B cell (primary cell): ENCODE measurements at regions of chr1 and their contacts with region 1.

Region 1: DNA sequence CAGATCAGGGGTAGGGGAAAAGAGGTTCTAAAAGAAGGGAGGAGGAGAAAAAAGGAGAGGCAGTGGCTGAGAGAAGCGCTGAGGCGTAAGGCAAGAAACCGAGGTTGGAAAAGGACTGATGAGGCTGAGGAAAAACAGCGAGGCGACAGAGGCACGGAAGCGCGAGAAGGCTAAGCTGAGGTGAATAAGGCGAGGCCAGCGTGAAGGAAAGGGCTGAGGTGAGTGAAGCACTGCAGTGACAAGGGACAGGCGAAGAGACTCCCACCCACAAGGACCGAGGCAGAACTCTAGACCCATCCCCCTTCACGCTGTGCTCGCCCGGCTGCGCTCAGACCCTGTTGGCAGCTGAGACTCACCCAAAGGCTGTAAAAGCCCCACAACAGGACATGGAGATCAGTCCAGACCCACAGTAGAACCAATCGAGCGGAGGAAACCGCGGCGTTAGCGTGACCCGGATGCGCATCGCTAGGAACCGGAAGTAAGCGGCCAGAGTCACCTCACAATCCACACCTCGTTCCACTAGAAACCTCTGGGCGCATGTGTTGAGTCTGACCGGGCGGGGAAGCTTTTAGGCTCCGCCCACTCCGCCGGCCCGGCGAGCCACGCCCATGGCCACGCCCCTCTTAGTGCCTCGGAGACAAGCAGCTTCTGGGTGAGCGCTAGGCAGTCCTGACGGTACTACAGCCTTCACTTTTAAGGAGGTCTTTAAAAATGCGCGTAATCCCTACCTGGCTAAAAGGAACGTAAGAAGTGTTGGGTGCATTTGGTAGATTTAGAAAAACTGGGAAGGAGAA is at the start of gene EYA3:
- DNase-seq: peak; percentile 99
- ATAC-seq: peak; percentile 93
- H3K4me3 ChIP-seq: peak within 1 kb of the TSS; percentile 79 to 97 (median 82)
- H3K4me3 Mint-ChIP-seq: peak within 1 kb of the TSS; percentile 94
- H3K27ac ChIP-seq: peak within 1 kb of the TSS; percentile 83 to 91
- H3K27ac Mint-ChIP-seq: peak within 1 kb of the TSS; percentile 96
- H3K4me1 ChIP-seq: peaks cover 11 to 24% of the 10 kb centered on the region in 2 donors
- H3K4me1 Mint-ChIP-seq: peaks cover 43% of the 10 kb centered on the region
- H3K27me3 ChIP-seq: no peaks in the 10 kb centered on the region
- H3K27me3 Mint-ChIP-seq: no peaks in the 10 kb centered on the region
- CTCF ChIP-seq: no peak
- total RNA-seq, gene EYA3: 31.3 and 31.7 TPM in 2 replicates

Region 2: DNA sequence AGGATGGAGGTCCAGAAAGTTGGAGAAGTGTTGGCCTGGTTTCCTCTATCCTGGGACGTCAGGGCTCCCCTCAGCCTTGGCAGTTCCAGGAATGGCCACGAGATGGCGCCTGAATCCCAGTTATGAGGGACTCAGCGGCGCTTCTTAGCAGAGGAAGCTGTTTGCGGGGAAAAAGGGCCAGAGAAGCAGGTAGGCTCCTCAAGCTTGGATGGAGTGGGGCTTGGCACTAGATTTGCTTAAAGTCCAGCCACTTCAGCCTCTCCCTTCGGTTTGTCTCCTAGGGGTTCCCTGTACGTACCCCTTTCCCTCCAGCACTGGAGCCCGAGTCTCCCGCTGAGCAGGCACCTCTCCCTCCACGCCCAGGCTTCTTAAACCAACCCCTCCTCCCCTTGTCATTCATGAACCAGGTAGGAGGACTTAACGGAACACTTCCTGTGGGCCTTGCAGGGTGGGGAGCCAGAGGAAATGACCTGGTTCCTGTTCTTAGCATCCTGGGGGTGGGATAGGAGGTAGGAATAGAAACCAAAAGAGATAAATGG is 1043.7 kb before region 1 on chr1:
- CTCF ChIA-PET with region 1: no interaction called
- POLR2A ChIA-PET with region 1: no interaction called
- intact Hi-C with region 1: no loop called
- DNase-seq: peak; percentile 88
- ATAC-seq: peak; percentile 94
- H3K4me3 ChIP-seq: peak overlapping the region in 4 of 5 experiments; percentile 6 to 51 (median 36)
- H3K4me3 Mint-ChIP-seq: peak overlapping the region; percentile 52
- H3K27ac ChIP-seq: no peak overlapping the region
- H3K27ac Mint-ChIP-seq: peak overlapping the region; percentile 6
- H3K4me1 ChIP-seq: peaks cover 6 to 15% of the 10 kb centered on the region in 2 donors
- H3K4me1 Mint-ChIP-seq: peaks cover 15% of the 10 kb centered on the region
- H3K27me3 ChIP-seq: peaks cover 0 to 5% (median 0%) of the 10 kb centered on the region in 4 experiments
- H3K27me3 Mint-ChIP-seq: peaks cover 3% of the 10 kb centered on the region
- CTCF ChIP-seq: peak; percentile 97

Region 3: DNA sequence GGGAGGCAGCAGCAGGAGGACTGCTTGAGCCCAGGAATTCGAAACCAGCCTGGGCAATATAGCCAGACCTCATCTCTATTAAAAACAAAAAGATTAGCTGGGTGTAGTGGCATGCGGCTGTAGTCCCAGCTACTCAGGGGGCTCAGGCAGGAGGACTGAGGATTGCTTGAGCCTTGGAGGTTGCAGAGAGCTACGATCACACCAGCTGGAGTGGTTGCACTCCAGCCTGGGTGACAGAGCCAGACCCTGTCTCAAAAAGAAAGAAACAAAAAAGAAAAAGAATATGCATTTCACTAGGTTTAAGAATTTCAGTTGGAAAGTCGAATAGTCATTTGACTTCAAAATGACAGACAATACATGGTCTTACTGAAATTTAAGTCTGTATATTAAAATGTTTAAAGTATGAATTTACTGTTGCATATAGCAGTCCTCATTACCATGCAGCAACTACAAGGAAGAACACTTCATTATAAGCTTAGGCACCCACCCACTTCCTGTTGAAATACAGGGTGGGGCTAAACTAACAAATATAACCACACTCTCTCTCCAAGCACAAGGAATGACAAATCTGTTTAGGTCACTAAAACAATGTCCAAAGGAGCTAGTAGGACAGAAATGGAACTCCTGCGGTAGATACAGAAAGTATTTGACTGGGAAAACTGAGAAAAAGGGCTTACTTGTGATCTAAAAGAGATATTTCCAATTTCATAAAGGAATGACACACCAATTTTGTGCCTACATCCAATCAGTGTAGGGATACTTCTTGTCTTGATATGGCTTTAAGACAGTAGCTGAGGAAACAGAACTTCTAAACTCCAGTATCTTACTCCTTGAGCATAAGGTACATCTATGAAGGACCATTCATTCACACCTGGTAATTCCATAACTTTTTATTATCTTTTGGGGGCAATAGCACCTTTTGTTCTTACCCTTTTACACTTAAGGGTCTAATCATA is 651.9 kb before region 1 on chr1:
- CTCF ChIA-PET with region 1: no interaction called
- POLR2A ChIA-PET with region 1: no interaction called
- intact Hi-C with region 1: no loop called
- DNase-seq: peak; percentile 50
- ATAC-seq: peak; percentile 55
- H3K4me3 ChIP-seq: peak overlapping the region; percentile 9 to 68 (median 34)
- H3K4me3 Mint-ChIP-seq: peak overlapping the region; percentile 84
- H3K27ac ChIP-seq: peak overlapping the region; percentile 71 to 83
- H3K27ac Mint-ChIP-seq: peak overlapping the region; percentile 86
- H3K4me1 ChIP-seq: peaks cover 76 to 78% of the 10 kb centered on the region in 2 donors
- H3K4me1 Mint-ChIP-seq: peaks cover 78% of the 10 kb centered on the region
- H3K27me3 ChIP-seq: no peaks in the 10 kb centered on the region
- H3K27me3 Mint-ChIP-seq: no peaks in the 10 kb centered on the region
- CTCF ChIP-seq: no peak

Region 4: DNA sequence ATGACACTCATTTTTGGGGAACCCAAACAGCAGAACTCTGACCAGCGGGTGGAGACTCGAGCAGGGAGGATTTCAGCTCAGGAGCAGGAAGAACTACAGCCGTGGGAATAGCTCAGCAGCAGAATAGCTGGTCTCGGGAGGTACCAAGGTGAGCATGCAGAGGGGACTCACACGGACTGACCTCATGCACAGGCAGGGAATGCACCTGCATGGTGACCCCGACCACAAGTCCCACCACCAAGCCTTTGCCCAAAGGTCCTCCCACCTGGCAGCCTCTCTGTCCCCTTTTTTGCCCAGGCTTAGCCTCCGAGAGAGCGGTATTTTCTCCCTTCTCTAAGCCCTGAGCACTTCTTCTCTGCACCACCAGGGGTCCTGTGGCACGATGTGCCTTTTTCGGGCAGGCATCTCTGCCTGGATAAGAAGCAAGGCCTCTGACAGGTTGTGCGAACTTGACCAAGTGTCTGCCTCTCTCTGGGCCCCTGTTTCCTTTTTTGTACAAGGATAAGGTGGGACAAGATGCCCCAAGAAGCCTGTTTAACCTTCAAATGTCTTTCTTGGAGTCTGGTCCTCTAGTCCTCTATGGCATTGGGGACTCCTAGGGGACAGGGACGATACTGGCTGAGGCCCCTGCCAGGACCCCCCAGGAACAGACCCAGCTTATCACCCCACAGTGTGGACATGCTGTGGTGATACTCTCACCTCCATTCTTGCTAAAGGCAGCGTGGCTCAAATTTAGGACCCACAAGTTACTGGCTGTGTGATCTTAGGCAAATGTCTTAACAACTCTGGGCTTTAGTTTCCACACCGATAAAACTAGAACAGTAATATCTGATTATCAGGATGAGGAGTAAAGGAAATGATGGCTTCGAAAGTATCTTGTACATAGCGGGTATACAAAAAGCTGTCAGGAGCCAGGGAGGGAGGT is 444.4 kb before region 1 on chr1:
- CTCF ChIA-PET with region 1: no interaction called
- POLR2A ChIA-PET with region 1: no interaction called
- intact Hi-C with region 1: no loop called
- DNase-seq: peak; percentile 82
- ATAC-seq: peak; percentile 98
- H3K4me3 ChIP-seq: no peak overlapping the region
- H3K4me3 Mint-ChIP-seq: no peak overlapping the region
- H3K27ac ChIP-seq: no peak overlapping the region
- H3K27ac Mint-ChIP-seq: peak overlapping the region; percentile 74
- H3K4me1 ChIP-seq: peaks cover 10 to 17% of the 10 kb centered on the region in 2 donors
- H3K4me1 Mint-ChIP-seq: peaks cover 16% of the 10 kb centered on the region
- H3K27me3 ChIP-seq: no peaks in the 10 kb centered on the region
- H3K27me3 Mint-ChIP-seq: no peaks in the 10 kb centered on the region
- CTCF ChIP-seq: peak; percentile 85

Region 5: GRCh38 chr1:27725374-27726173 is 362.8 kb before region 1 on chr1 and contains the start of gene FAM76A:
- CTCF ChIA-PET with region 1: no interaction called
- POLR2A ChIA-PET with region 1: no interaction called
- intact Hi-C with region 1: loop called (anchors 5 kb)
- DNase-seq: peak; percentile 100
- ATAC-seq: peak; percentile 91
- H3K4me3 ChIP-seq: peak within 1 kb of the TSS; percentile 68 to 94 (median 74)
- H3K4me3 Mint-ChIP-seq: peak within 1 kb of the TSS; percentile 94
- H3K27ac ChIP-seq: peak within 1 kb of the TSS; percentile 96 to 98
- H3K27ac Mint-ChIP-seq: peak within 1 kb of the TSS; percentile 98
- H3K4me1 ChIP-seq: peaks cover 17% of the 10 kb centered on the region in 2 donors
- H3K4me1 Mint-ChIP-seq: peaks cover 25% of the 10 kb centered on the region
- H3K27me3 ChIP-seq: no peaks in the 10 kb centered on the region
- H3K27me3 Mint-ChIP-seq: no peaks in the 10 kb centered on the region
- CTCF ChIP-seq: peak; percentile 27
- total RNA-seq, gene FAM76A: 25.0 and 28.5 TPM in 2 replicates

Region 6: DNA sequence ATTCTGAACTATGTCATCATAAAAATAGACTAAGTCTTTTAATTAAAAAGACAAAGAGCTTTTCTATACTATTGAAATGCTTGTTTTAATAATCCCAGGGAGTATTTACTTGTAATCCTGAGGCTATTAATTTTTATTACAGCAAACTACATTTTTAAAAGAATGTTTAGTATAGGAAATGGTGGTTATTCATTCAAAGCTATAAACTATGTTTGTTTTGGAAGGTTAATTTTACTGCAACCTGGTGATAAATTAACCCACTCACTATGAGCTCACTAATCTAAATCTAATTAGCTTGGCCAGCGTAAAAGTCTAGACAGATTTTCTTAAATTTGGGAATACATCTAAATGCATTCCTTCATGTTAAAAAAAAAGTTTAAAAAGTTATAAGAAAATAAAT is 13.8 kb after region 1 on chr1:
- CTCF ChIA-PET with region 1: interaction called, 11 read pairs
- POLR2A ChIA-PET with region 1: no interaction called
- intact Hi-C with region 1: no loop called
- DNase-seq: no peak
- ATAC-seq: no peak
- H3K4me3 ChIP-seq: no peak overlapping the region
- H3K4me3 Mint-ChIP-seq: no peak overlapping the region
- H3K27ac ChIP-seq: no peak overlapping the region
- H3K27ac Mint-ChIP-seq: no peak overlapping the region
- H3K4me1 ChIP-seq: no peaks in the 10 kb centered on the region
- H3K4me1 Mint-ChIP-seq: no peaks in the 10 kb centered on the region
- H3K27me3 ChIP-seq: no peaks in the 10 kb centered on the region
- H3K27me3 Mint-ChIP-seq: no peaks in the 10 kb centered on the region
- CTCF ChIP-seq: no peak

Region 7: DNA sequence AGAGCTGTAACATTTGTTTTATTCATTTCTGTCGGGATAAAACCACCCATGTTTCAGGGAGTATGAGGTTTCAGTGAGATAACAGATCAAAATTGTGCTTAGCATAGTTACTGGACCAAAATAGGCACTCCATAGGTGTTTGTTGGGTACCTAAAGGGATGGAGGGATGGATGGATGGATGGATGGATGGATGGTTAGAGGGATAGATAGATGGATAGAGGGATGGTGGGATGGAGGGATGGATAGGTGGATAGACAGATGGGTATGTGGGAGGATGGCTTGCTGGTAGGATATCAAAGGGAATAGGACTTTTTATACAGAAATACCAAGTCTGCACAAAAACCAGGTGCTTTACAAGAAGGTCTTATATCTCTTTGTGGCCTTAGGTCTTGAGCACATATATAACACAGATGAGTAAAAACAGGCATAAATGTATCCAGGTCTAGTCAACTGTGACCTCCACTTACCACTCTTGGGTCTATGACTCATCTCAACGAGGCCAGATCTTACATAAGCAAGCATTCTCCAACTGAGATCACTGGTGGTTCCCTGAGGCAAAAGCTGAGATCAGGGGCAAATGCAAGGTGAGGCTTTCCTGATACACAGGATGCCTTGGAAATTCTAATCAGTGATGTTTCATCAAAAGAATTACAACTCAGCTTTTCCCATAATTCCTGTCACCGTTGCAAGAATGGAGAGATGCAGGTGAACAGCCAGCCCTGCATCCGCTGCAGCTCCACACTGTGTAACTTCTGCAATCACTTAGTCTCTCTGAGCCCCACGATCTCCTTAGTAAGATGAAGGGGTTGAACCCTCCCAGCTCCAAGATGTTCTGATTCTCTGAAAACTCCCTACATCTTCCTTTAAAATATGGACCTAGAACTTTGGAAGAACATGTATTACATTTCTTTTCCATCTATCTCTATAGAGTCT is 56.1 kb after region 1 on chr1:
- CTCF ChIA-PET with region 1: interaction called, 19 read pairs
- POLR2A ChIA-PET with region 1: no interaction called
- intact Hi-C with region 1: loop called (anchors 5 kb)
- DNase-seq: peak; percentile 39
- ATAC-seq: peak; percentile 80
- H3K4me3 ChIP-seq: no peak overlapping the region
- H3K4me3 Mint-ChIP-seq: peak overlapping the region; percentile 36
- H3K27ac ChIP-seq: no peak overlapping the region
- H3K27ac Mint-ChIP-seq: peak overlapping the region; percentile 76
- H3K4me1 ChIP-seq: peaks cover 13 to 42% of the 10 kb centered on the region in 2 donors
- H3K4me1 Mint-ChIP-seq: peaks cover 40% of the 10 kb centered on the region
- H3K27me3 ChIP-seq: no peaks in the 10 kb centered on the region
- H3K27me3 Mint-ChIP-seq: no peaks in the 10 kb centered on the region
- CTCF ChIP-seq: no peak

Region 8: GRCh38 chr1:28195780-28196179 is 107.4 kb after region 1 on chr1:
- CTCF ChIA-PET with region 1: interaction called, 10 read pairs
- POLR2A ChIA-PET with region 1: interaction called, 8 read pairs
- intact Hi-C with region 1: no loop called
- DNase-seq: no peak
- ATAC-seq: no peak
- H3K4me3 ChIP-seq: no peak overlapping the region
- H3K4me3 Mint-ChIP-seq: no peak overlapping the region
- H3K27ac ChIP-seq: no peak overlapping the region
- H3K27ac Mint-ChIP-seq: no peak overlapping the region
- H3K4me1 ChIP-seq: peaks cover 13 to 18% of the 10 kb centered on the region in 2 donors
- H3K4me1 Mint-ChIP-seq: peaks cover 23% of the 10 kb centered on the region
- H3K27me3 ChIP-seq: no peaks in the 10 kb centered on the region
- H3K27me3 Mint-ChIP-seq: no peaks in the 10 kb centered on the region
- CTCF ChIP-seq: no peak

Region 9: DNA sequence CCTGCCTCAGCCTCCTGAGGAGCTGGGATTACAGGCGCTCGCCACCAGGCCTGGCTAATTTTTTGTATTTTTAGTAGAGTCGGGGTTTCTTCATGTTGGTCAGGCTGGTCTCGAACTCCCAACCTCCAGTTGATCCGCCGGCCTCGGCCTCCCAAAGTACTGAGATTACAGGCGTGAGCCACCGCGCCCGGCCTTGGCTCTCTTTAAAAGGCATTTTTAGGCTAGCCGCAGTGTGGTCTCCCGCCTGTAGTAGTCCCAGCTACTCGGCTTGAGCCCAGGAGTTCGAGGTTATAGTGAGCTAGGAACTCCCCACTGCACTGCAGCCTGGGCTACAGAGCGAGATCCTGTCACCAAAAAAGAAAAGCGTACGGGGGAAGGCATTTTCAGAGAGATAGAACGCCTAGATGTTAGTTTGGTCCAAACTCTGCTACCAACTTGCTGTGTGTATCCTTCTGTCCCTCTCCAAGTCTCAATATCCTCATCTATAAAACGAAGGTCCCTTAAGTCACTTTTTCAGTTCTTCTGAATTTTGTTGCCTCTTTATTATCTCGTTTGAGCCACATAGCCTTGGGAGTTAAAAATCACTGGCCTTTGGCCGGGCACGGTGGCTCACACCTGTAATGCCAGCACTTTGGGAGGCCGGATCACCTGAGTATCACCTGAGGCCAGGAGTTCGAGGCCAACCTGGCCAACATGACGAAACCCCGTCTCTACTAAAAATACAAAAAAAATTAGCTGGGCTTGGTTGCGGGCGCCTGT is 241.2 kb after region 1 on chr1:
- CTCF ChIA-PET with region 1: interaction called, 4 read pairs
- POLR2A ChIA-PET with region 1: interaction called, 4 read pairs
- intact Hi-C with region 1: loop called (anchors 1 kb)
- DNase-seq: peak; percentile 67
- ATAC-seq: no peak
- H3K4me3 ChIP-seq: peak overlapping the region; percentile 72 to 93 (median 80)
- H3K4me3 Mint-ChIP-seq: peak overlapping the region; percentile 91
- H3K27ac ChIP-seq: peak overlapping the region; percentile 91 to 99
- H3K27ac Mint-ChIP-seq: peak overlapping the region; percentile 99
- H3K4me1 ChIP-seq: peaks cover 34 to 41% of the 10 kb centered on the region in 2 donors
- H3K4me1 Mint-ChIP-seq: peaks cover 45% of the 10 kb centered on the region
- H3K27me3 ChIP-seq: no peaks in the 10 kb centered on the region
- H3K27me3 Mint-ChIP-seq: no peaks in the 10 kb centered on the region
- CTCF ChIP-seq: no peak